CD8-positive, alpha-beta T cell (primary cell): ENCODE measurements at regions of chr6 and their contacts with region 1.

Region 1: DNA sequence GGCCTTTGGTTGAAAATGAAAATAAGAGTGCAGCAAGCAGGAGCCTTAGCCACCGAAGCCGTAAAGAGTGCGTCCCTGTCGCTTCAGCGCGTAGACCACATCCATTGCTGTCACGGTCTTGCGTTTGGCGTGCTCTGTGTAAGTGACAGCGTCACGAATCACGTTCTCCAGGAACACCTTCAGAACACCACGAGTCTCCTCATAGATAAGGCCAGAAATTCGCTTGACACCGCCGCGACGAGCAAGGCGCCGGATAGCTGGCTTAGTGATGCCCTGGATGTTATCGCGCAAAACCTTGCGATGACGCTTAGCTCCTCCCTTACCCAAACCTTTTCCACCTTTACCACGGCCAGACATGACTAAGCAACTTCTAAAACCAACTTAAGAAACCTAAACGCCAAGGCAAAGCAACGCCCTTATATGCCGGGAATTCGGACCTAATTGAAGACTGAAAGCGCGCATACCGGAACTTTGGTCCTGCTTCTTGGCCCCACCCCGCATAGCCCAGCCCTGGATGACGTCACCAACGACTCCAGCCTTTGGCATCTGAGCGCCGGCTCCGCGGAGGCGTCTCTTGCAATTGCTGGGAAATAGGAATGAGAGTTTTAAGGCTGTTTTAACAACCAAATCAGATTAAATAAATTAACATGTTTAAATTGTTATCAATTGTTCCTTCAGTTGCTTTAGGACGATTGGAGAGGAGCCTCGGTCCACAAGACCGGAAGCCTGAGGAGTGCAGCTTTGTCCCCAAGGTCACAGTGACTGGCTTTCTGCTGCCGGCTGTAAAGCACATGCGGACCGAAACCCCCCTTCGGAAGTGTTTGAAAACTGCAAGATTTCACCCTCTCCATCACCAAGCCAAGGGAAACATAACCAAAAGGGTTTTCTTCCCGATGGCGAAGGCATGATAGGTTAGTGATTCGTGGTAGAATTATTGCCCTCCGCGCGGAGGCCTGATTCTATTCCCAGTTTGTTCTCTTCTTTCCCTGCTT is 79.6 kb upstream of the BTN3A2 start:
- DNase-seq: peak; percentile 83 to 99 (median 96)
- ATAC-seq: peak; percentile 82
- H3K4me3 ChIP-seq: peak overlapping the region; percentile 73 to 76
- H3K4me3 Mint-ChIP-seq: peak overlapping the region; percentile 91
- H3K27ac ChIP-seq: peak overlapping the region; percentile 89 to 96
- H3K27ac Mint-ChIP-seq: peak overlapping the region; percentile 97
- H3K4me1 ChIP-seq: peaks cover 14% of the 10 kb centered on the region
- H3K4me1 Mint-ChIP-seq: peaks cover 31% of the 10 kb centered on the region
- H3K27me3 ChIP-seq: no peaks in the 10 kb centered on the region
- H3K27me3 Mint-ChIP-seq: no peaks in the 10 kb centered on the region
- CTCF ChIP-seq: no peak

Region 2: GRCh38 chr6:25670793-25671513 is 614.5 kb before region 1 on chr6:
- CTCF ChIA-PET with region 1: no interaction called
- POLR2A ChIA-PET with region 1: no interaction called
- intact Hi-C with region 1: no loop called
- DNase-seq: no peak
- ATAC-seq: no peak
- H3K4me3 ChIP-seq: no peak overlapping the region
- H3K4me3 Mint-ChIP-seq: no peak overlapping the region
- H3K27ac ChIP-seq: no peak overlapping the region
- H3K27ac Mint-ChIP-seq: no peak overlapping the region
- H3K4me1 ChIP-seq: no peaks in the 10 kb centered on the region
- H3K4me1 Mint-ChIP-seq: no peaks in the 10 kb centered on the region
- H3K27me3 ChIP-seq: no peaks in the 10 kb centered on the region
- H3K27me3 Mint-ChIP-seq: peaks cover 6% of the 10 kb centered on the region
- CTCF ChIP-seq: no peak

Region 3: GRCh38 chr6:26031595-26032339 is 253.7 kb before region 1 on chr6:
- CTCF ChIA-PET with region 1: no interaction called
- POLR2A ChIA-PET with region 1: interaction called, 11 read pairs
- intact Hi-C with region 1: loop called in 1 of 2 experiments (anchors 2 kb)
- DNase-seq: peak; percentile 79 to 93 (median 88)
- ATAC-seq: peak; percentile 63
- H3K4me3 ChIP-seq: peak overlapping the region; percentile 68 to 71
- H3K4me3 Mint-ChIP-seq: peak overlapping the region; percentile 93
- H3K27ac ChIP-seq: peak overlapping the region; percentile 76 to 79
- H3K27ac Mint-ChIP-seq: peak overlapping the region; percentile 96
- H3K4me1 ChIP-seq: peaks cover 31% of the 10 kb centered on the region
- H3K4me1 Mint-ChIP-seq: peaks cover 46% of the 10 kb centered on the region
- H3K27me3 ChIP-seq: no peaks in the 10 kb centered on the region
- H3K27me3 Mint-ChIP-seq: no peaks in the 10 kb centered on the region
- CTCF ChIP-seq: no peak

Region 4: GRCh38 chr6:26204332-26205165 is 80.9 kb before region 1 on chr6:
- CTCF ChIA-PET with region 1: interaction called, 13 read pairs
- POLR2A ChIA-PET with region 1: interaction called, 113 read pairs
- intact Hi-C with region 1: loop called in 1 of 2 experiments (anchors 1 kb)
- DNase-seq: peak; percentile 75 to 98 (median 84)
- ATAC-seq: peak; percentile 74
- H3K4me3 ChIP-seq: peak overlapping the region; percentile 54 to 70
- H3K4me3 Mint-ChIP-seq: no peak overlapping the region
- H3K27ac ChIP-seq: peak overlapping the region; percentile 91
- H3K27ac Mint-ChIP-seq: no peak overlapping the region
- H3K4me1 ChIP-seq: peaks cover 31% of the 10 kb centered on the region
- H3K4me1 Mint-ChIP-seq: peaks cover 23% of the 10 kb centered on the region
- H3K27me3 ChIP-seq: no peaks in the 10 kb centered on the region
- H3K27me3 Mint-ChIP-seq: no peaks in the 10 kb centered on the region
- CTCF ChIP-seq: no peak

Region 5: GRCh38 chr6:26240154-26241032 is 45.0 kb before region 1 on chr6:
- CTCF ChIA-PET with region 1: interaction called, 3 read pairs
- POLR2A ChIA-PET with region 1: interaction called, 99 read pairs
- intact Hi-C with region 1: loop called (anchors 1 to 2 kb)
- DNase-seq: peak; percentile 40 to 93 (median 67)
- ATAC-seq: peak; percentile 81
- H3K4me3 ChIP-seq: peak overlapping the region; percentile 50 to 62
- H3K4me3 Mint-ChIP-seq: peak overlapping the region; percentile 88
- H3K27ac ChIP-seq: peak overlapping the region; percentile 74 to 88
- H3K27ac Mint-ChIP-seq: peak overlapping the region; percentile 98
- H3K4me1 ChIP-seq: peaks cover 8% of the 10 kb centered on the region
- H3K4me1 Mint-ChIP-seq: peaks cover 21% of the 10 kb centered on the region
- H3K27me3 ChIP-seq: no peaks in the 10 kb centered on the region
- H3K27me3 Mint-ChIP-seq: no peaks in the 10 kb centered on the region
- CTCF ChIP-seq: no peak

Region 6: DNA sequence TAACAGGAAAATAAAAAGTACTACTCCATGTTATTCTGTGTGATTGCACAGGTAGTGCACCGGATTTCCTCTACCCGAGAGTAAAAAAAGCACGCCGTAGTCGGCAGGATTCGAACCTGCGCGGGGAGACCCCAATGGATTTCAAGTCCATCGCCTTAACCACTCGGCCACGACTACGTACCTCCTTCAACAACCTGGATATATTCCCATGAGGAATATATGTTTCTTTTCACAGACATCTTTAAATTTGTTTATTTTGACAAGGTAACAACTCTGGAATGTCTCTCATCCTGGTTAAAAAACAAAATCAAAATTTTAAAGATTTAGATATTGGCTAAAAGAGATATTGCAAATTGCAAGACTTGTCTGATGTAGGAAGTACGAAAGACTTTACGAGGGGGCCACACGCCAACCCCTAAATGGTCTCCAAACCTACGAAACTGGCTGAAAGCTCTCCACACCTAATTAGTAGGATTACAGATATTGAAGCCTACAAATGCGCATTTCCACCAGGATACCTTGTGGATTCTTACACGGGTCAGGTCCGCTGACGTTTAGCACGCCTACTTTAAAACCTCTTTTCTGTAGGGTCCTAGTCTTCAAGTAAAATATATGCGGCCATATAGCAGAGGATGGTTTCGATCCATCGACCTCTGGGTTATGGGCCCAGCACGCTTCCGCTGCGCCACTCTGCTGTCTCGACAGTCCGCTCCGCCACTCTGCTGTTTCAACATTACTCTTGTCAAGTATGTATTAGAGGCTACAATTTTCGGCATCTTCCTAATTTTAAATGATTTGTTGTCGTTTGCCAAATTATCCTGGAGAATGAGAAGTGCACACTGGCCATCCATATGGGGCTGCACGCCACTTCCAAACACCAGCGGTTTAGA is 27.3 kb after region 1 on chr6:
- CTCF ChIA-PET with region 1: no interaction called
- POLR2A ChIA-PET with region 1: interaction called, 10 read pairs
- intact Hi-C with region 1: loop called (anchors 1 kb)
- DNase-seq: peak; percentile 74 to 92 (median 87)
- ATAC-seq: peak; percentile 51
- H3K4me3 ChIP-seq: peak overlapping the region; percentile 70 to 76
- H3K4me3 Mint-ChIP-seq: peak overlapping the region; percentile 89
- H3K27ac ChIP-seq: peak overlapping the region; percentile 38 to 49
- H3K27ac Mint-ChIP-seq: peak overlapping the region; percentile 93
- H3K4me1 ChIP-seq: no peaks in the 10 kb centered on the region
- H3K4me1 Mint-ChIP-seq: peaks cover 41% of the 10 kb centered on the region
- H3K27me3 ChIP-seq: no peaks in the 10 kb centered on the region
- H3K27me3 Mint-ChIP-seq: no peaks in the 10 kb centered on the region
- CTCF ChIP-seq: no peak

Region 7: DNA sequence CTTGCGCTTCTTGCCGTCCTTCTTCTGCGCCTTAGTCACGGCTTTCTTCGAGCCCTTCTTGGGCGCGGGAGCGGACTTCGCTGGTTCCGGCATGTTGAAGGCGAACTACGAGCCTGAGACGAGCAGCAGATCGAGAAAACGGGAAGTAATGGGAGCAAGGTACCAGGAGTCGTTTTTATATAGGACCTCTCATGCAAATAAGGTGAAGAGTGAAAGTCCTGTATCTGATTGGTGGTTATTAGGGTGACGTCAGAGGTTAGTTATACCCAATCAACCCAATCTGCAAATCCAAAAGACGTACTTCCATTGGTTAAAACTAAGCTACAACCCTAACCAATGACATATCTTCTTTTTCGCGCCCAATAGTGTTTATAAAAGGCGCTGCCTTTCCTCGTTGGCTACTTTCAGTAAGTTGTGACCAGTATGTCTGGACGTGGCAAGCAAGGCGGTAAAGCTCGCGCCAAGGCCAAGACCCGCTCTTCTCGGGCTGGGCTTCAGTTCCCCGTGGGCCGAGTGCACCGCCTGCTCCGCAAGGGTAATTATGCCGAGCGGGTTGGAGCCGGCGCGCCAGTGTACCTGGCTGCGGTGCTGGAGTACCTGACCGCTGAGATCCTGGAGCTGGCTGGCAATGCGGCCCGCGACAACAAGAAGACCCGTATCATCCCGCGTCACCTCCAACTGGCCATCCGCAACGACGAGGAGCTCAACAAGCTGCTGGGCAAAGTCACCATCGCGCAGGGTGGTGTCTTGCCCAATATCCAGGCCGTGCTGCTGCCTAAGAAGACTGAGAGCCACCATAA is 861.5 kb after region 1 on chr6:
- CTCF ChIA-PET with region 1: no interaction called
- POLR2A ChIA-PET with region 1: interaction called, 19 read pairs
- intact Hi-C with region 1: no loop called
- DNase-seq: peak; percentile 56 to 98 (median 74)
- ATAC-seq: peak; percentile 85
- H3K4me3 ChIP-seq: peak overlapping the region; percentile 71 to 77
- H3K4me3 Mint-ChIP-seq: no peak overlapping the region
- H3K27ac ChIP-seq: peak overlapping the region; percentile 84 to 91
- H3K27ac Mint-ChIP-seq: no peak overlapping the region
- H3K4me1 ChIP-seq: peaks cover 11% of the 10 kb centered on the region
- H3K4me1 Mint-ChIP-seq: peaks cover 13% of the 10 kb centered on the region
- H3K27me3 ChIP-seq: no peaks in the 10 kb centered on the region
- H3K27me3 Mint-ChIP-seq: no peaks in the 10 kb centered on the region
- CTCF ChIP-seq: no peak

Region 8: DNA sequence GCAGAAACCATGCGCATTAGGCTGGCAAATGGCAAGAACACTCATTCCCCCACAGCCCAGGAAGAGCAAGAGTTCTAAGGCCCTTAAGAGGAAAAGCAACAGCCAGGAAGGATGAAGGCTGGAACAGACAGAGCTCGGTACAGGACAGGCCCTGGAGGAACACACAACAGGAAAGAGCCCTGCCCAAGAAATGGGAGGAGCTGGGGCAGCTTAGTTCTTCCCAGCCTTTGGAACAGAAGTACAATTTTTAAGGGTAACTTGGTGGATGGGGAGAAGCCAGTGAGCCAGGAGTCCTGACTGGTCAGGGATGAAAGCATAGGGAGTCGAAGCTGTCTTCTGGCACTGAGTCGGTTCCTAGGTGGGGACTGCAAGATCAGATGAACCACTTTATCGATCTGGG is 1594.4 kb after region 1 on chr6:
- CTCF ChIA-PET with region 1: no interaction called
- POLR2A ChIA-PET with region 1: no interaction called
- intact Hi-C with region 1: no loop called
- DNase-seq: no peak
- ATAC-seq: no peak
- H3K4me3 ChIP-seq: no peak overlapping the region
- H3K4me3 Mint-ChIP-seq: no peak overlapping the region
- H3K27ac ChIP-seq: no peak overlapping the region
- H3K27ac Mint-ChIP-seq: no peak overlapping the region
- H3K4me1 ChIP-seq: no peaks in the 10 kb centered on the region
- H3K4me1 Mint-ChIP-seq: no peaks in the 10 kb centered on the region
- H3K27me3 ChIP-seq: no peaks in the 10 kb centered on the region
- H3K27me3 Mint-ChIP-seq: no peaks in the 10 kb centered on the region
- CTCF ChIP-seq: no peak